ENCODE measurements at regions of chr14 and their contacts with region 1.

Region 1: GRCh38 chr14:61147831-61148549 is 133.1 kb downstream of the TMEM30B start:
- DNase-seq: peak in 1 of 2 experiments; percentile 84
- H3K4me3 ChIP-seq: no peak overlapping the region
- H3K27ac ChIP-seq: no peak overlapping the region
- H3K4me1 ChIP-seq: no peaks in the 10 kb centered on the region
- H3K27me3 ChIP-seq: no peaks in the 10 kb centered on the region
- CTCF ChIP-seq: no peak

Region 2: DNA sequence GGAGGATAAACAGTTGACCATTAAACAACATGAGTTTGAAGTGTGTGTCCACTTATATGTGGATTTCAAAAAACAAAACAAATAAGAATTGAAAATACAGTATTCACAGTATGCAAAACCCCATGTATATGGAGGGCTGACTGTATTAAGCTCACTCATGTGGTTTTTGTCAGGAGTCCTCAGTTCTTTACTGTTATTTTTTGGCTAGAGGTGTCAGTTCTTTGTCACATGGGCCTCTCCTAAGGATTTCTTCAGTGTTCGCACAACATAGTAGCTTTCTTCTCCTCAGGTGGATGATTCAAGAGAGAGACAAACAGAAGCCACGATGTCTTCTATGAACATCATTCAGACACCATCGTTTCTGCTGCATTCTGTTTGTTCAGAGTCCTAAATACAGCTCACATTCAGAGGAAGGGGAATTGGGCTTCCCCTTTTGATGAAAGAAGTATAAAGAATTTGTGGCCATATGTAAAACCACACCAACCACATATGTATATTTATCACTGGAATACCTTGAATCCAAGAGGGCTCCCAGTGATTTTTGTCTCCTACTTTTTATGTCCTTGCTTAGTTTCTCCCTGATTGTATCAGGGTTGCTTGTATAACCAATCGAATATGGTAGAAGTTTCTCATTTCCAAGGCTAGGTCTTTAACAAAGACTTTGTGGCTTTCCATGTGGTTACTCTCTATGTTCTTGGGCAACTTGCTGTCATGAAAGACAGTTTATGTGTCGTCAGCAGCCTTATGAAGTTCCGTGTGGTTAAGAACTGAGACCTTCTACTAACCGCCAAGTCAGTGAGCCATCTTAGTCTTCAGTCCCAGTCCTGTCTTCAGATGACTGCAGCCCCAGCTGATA is 394.5 kb before region 1 on chr14:
- CTCF ChIA-PET with region 1: no interaction called
- POLR2A ChIA-PET with region 1: interaction called, 32 read pairs
- intact Hi-C with region 1: no loop called
- DNase-seq: no peak
- H3K4me3 ChIP-seq: no peak overlapping the region
- H3K27ac ChIP-seq: no peak overlapping the region
- H3K4me1 ChIP-seq: peaks cover 26% of the 10 kb centered on the region
- H3K27me3 ChIP-seq: no peaks in the 10 kb centered on the region
- CTCF ChIP-seq: no peak